ENCODE measurements at regions of chr17 and their contacts with region 1.

Region 1: DNA sequence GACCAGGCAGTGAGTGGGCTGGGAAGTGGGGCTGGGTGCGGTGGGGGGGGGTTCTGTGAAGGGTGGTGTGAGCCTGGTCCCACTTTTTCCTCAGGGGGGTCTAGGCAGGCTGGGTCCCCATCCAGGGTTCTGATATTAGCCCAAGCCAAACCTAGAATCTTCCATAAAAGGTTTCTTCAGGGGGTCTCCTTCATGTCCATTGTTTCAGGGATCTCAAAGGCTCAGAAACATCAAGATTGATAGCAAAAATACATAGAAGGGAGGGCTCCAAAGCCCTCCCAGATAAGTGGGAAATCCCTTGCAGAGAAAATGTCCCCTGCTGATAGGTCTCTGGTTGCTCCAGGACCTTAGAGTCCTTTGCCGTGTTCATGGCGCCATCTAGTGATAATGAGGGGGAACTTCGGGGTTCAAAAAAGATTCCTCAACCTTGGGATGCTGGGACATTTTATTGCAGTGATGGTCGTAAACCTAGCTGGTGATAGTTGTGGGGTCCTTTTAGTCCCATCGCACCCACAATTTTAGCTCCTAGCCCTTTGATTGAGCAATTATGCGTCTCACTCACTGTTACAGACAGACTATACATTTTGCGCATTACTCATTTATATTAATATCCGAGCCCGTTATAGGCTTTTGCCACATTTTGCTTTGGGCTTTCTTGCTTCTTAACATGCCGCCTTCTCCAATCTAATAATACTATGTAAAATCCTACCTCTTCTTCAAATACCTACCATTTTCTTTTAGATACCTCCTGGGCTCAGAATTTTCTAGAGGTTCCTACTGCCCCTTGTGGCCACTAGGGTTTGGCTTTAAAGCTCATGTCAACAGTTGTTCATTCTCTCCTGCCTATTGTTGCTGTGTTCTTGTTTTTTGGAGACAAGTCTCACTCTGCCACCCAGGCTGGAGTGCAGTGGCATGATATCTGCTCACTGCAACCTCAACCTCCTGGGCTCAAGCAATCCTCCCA is 35.1 kb downstream of the IGF2BP1 start:
- DNase-seq: peak; percentile 65
- H3K4me3 Mint-ChIP-seq: no peak overlapping the region
- H3K27ac Mint-ChIP-seq: no peak overlapping the region
- H3K4me1 Mint-ChIP-seq: peaks cover 4% of the 10 kb centered on the region
- H3K27me3 Mint-ChIP-seq: peaks cover 4% of the 10 kb centered on the region

Region 2: GRCh38 chr17:48804925-48805411 is 227.3 kb before region 1 on chr17:
- CTCF ChIA-PET with region 1: interaction called, 11 read pairs
- intact Hi-C with region 1: loop called (anchors 1 kb)
- DNase-seq: peak; percentile 78
- H3K4me3 Mint-ChIP-seq: no peak overlapping the region
- H3K27ac Mint-ChIP-seq: no peak overlapping the region
- H3K4me1 Mint-ChIP-seq: no peaks in the 10 kb centered on the region
- H3K27me3 Mint-ChIP-seq: peaks cover 5% of the 10 kb centered on the region

Region 3: GRCh38 chr17:48816774-48817590 is 215.3 kb before region 1 on chr17 and contains the start of gene TTLL6:
- CTCF ChIA-PET with region 1: interaction called, 3 read pairs
- intact Hi-C with region 1: loop called (anchors 2 kb)
- DNase-seq: peak; percentile 74
- H3K4me3 Mint-ChIP-seq: peak within 1 kb of the TSS; percentile 71
- H3K27ac Mint-ChIP-seq: no peak within 1 kb of the TSS
- H3K4me1 Mint-ChIP-seq: peaks cover 20% of the 10 kb centered on the region
- H3K27me3 Mint-ChIP-seq: peaks cover 28% of the 10 kb centered on the region
- total RNA-seq, gene TTLL6: not detected

Region 4: GRCh38 chr17:48954300-48954755 is 77.9 kb before region 1 on chr17:
- CTCF ChIA-PET with region 1: interaction called, 6 read pairs
- intact Hi-C with region 1: loop called (anchors 1 kb)
- DNase-seq: peak; percentile 43
- H3K4me3 Mint-ChIP-seq: no peak overlapping the region
- H3K27ac Mint-ChIP-seq: no peak overlapping the region
- H3K4me1 Mint-ChIP-seq: peaks cover 4% of the 10 kb centered on the region
- H3K27me3 Mint-ChIP-seq: peaks cover 17% of the 10 kb centered on the region